Posterior vena cava (tissue), 2 donors: ENCODE measurements at regions of chr11 and their contacts with region 1.

Region 1: DNA sequence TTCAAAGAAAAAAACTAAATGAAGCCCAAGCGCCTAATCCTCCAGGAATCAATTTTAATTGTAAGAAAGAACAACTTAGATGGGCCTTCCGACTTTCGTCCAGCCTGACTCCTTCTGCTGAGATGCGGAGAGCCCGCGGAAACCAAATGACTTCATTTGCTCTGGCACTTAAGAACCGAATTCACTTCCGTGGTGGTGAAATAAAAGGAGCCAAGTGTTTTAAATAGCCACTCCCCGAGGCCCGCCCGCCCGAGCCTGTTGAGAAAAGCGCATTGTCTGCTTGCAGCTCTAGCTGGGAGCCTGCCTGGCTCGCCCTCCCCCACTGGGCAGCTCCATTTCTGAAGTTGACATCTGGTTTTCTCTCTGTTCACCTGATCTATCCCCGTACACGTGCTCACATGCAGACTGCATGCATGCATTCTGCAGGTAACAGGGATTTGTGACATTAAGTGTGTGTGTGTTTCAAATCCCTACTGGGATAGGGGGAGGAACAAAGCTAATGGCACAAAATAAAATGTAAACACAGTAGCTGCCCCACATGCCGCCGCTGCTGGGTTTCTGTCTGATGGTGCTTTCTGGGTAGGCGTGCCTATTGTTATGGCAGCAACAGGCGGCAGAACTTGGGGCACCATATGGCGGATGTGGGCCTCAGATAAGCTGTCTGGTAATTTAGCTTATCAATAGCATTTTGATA is 6.2 kb downstream of the TEAD1 start:
- DNase-seq: peak; percentile 93

Region 2: GRCh38 chr11:12552692-12553091 is 127.7 kb before region 1 on chr11:
- intact Hi-C with region 1: no loop called
- DNase-seq: no peak

Region 3: GRCh38 chr11:12761029-12761428 is 80.6 kb after region 1 on chr11:
- intact Hi-C with region 1: no loop called
- DNase-seq: no peak

Region 4: GRCh38 chr11:12802418-12803085 is 122.2 kb after region 1 on chr11:
- intact Hi-C with region 1: loop called in 1 of 2 experiments (anchors 10 kb)
- DNase-seq: peak; percentile 75

Region 5: GRCh38 chr11:13728076-13728475 is 1047.7 kb after region 1 on chr11:
- intact Hi-C with region 1: no loop called
- DNase-seq: no peak